Activated B cell treated with CpG ODN at 0.5 μM for 24 hours (primary cell): ENCODE measurements at regions of chr19 and their contacts with region 1.

Region 1: DNA sequence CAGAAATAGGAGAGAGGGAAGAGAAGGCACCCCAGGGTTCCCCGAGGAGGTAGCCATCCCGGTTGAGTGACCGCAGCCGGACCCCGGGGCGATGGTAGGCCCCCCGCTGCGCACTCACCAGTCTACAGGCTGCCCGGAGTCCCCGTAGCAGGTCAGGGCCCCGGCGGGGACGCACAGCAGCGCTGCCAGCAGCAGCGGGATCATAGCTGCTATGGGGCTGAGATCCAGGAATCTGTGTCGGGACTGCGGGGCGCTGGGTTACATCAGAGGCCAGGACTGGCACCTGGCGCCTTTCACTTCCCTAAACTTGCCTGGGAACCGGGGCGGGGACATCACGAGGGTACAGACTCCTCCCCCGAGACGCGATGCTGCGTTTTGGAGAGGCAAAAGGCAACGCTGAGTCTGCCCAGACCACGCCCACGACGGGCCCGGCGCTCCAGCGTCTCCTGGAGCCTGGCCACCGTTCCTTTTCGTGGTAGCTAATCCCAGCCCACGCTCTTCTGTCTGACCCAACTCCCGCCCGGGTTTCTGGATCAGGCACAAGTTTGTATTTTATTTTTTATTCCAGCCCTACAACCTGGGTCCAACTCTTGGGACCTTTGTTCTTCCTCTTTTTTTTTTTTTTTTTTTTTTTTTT is at the start of gene DNASE2:
- DNase-seq: peak; percentile 85
- ATAC-seq: peak; percentile 84
- H3K4me3 Mint-ChIP-seq: peak within 1 kb of the TSS; percentile 92
- H3K27ac Mint-ChIP-seq: peak within 1 kb of the TSS; percentile 94
- H3K4me1 Mint-ChIP-seq: peaks cover 34% of the 10 kb centered on the region
- H3K27me3 Mint-ChIP-seq: no peaks in the 10 kb centered on the region
- CTCF ChIP-seq: no peak
- total RNA-seq, gene DNASE2: 26.5 and 27.2 TPM in 2 replicates

Region 2: GRCh38 chr19:12867120-12868099 is 13.9 kb before region 1 on chr19:
- CTCF ChIA-PET with region 1: no interaction called
- POLR2A ChIA-PET with region 1: interaction called, 5 read pairs
- intact Hi-C with region 1: loop called (anchors 1 kb)
- DNase-seq: peak; percentile 74
- ATAC-seq: peak; percentile 89
- H3K4me3 Mint-ChIP-seq: peak overlapping the region; percentile 85
- H3K27ac Mint-ChIP-seq: peak overlapping the region; percentile 14
- H3K4me1 Mint-ChIP-seq: peaks cover 13% of the 10 kb centered on the region
- H3K27me3 Mint-ChIP-seq: peaks cover 2% of the 10 kb centered on the region
- CTCF ChIP-seq: no peak

Region 3: GRCh38 chr19:12913011-12913561 is 31.8 kb after region 1 on chr19:
- CTCF ChIA-PET with region 1: no interaction called
- POLR2A ChIA-PET with region 1: interaction called, 10 read pairs
- intact Hi-C with region 1: loop called (anchors 2 kb)
- DNase-seq: no peak
- ATAC-seq: no peak
- H3K4me3 Mint-ChIP-seq: no peak overlapping the region
- H3K27ac Mint-ChIP-seq: no peak overlapping the region
- H3K4me1 Mint-ChIP-seq: peaks cover 12% of the 10 kb centered on the region
- H3K27me3 Mint-ChIP-seq: no peaks in the 10 kb centered on the region
- CTCF ChIP-seq: no peak

Region 4: DNA sequence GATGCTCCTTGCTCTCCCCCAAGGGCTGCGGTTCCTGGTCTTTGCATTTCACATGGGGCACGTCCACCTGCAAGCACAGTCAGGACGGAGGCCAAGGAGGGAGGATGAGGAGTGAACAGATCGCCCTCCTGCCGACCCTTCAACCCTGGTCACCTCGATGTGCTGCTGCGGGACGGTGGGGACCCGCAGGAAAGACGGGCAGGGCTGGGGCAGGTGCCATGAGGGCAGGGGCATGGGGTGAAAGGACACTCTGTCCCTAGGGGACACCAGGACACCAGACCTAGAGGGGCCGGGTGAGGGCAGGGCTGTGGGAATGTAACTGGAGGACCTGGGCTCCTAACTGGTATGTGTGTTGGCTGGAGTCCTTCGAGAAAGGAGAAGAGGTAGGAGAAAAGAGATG is 37.0 kb after region 1 on chr19:
- CTCF ChIA-PET with region 1: no interaction called
- POLR2A ChIA-PET with region 1: interaction called, 17 read pairs
- intact Hi-C with region 1: loop called (anchors 1 kb)
- DNase-seq: no peak
- ATAC-seq: no peak
- H3K4me3 Mint-ChIP-seq: no peak overlapping the region
- H3K27ac Mint-ChIP-seq: no peak overlapping the region
- H3K4me1 Mint-ChIP-seq: peaks cover 21% of the 10 kb centered on the region
- H3K27me3 Mint-ChIP-seq: no peaks in the 10 kb centered on the region
- CTCF ChIP-seq: no peak

Region 5: DNA sequence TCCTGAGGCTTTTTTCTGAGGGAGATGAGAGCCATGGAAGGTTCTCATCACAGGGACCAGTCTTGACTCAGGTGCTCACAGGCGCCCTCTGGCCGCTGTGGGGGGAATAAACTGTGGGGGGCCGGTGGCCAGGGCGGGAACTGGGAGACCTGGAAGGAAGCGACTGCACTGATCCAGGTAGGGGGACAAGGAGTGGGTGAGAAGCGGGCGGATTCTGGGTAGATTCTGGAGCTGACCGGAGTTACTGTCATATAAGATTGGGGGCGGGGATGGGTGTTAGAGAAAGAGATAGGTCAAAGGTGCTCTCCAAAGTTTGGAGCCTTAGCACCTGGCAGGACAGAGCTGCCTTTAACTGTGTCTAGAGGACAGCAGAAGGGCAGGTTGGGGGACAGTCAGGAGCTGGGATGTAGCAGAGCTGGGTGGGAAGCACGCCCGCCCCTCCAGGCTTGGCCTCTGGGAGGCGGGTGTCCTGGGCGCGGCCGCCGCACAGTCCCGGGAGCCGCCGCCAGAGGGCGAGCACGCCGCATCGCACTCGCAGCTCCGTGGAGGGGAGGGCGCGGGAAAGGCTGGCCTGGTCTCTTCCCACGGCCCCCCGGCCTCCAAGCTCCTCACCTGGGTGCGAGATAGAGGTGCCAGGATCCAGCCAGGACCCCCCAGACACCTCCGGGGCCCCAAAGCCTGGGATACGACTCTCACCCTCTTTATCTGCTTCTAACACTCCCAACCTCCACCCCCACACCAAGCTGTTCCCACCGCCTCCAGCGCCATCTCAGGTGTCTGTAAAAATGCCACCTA is 83.9 kb after region 1 on chr19:
- CTCF ChIA-PET with region 1: interaction called, 39 read pairs
- POLR2A ChIA-PET with region 1: interaction called, 13 read pairs
- intact Hi-C with region 1: loop called (anchors 1 kb)
- DNase-seq: peak; percentile 91
- ATAC-seq: peak; percentile 97
- H3K4me3 Mint-ChIP-seq: peak overlapping the region; percentile 87
- H3K27ac Mint-ChIP-seq: peak overlapping the region; percentile 69
- H3K4me1 Mint-ChIP-seq: peaks cover 7% of the 10 kb centered on the region
- H3K27me3 Mint-ChIP-seq: no peaks in the 10 kb centered on the region
- CTCF ChIP-seq: no peak

Region 6: DNA sequence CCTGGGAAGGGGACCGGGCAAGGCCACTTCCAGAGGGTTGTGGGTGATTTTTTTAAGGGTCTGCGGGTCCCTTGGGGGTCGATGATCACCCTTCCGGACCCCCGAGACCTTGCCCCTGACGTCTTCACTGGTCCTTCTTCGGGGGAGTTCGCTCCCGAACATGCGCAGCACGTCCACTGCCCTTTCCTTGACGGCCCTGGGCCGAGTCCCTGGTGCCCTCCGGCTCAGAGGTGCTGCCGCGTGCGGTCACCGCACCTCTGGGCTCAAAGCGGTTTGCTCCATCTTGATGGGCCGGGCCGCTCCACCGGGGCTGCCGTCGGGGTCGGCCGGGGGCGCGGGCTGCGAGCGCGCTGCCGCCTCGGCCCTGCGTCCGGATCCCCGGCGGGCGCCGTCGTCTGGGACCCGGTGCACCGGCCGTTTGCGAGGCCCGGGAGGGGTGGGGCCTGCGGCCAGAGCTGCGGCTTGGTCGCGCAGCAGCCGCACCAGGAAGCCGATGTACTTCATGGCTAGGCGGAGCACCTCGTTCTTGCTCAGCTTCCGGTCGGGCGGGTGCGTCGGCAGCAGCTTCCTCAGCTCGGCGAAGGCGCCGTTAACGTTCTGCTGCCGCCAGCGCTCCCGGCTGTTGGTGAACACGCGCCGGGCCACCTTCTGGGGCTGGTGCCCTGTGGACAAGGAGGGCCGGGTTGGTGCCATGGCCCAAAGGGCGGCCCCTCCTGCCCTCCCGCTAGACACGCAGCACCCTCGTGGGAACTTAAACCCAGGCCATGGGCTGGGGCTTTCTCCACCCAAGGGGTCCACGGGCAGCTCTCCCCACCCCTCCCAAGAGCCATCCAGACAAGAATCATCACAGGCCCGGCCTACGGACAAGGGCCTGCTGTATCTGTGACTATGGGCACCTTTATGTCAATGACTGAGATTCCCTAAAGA is 218.0 kb after region 1 on chr19:
- CTCF ChIA-PET with region 1: interaction called, 6 read pairs
- POLR2A ChIA-PET with region 1: interaction called, 14 read pairs
- intact Hi-C with region 1: no loop called
- DNase-seq: peak; percentile 70
- ATAC-seq: peak; percentile 2
- H3K4me3 Mint-ChIP-seq: peak overlapping the region; percentile 88
- H3K27ac Mint-ChIP-seq: peak overlapping the region; percentile 93
- H3K4me1 Mint-ChIP-seq: peaks cover 76% of the 10 kb centered on the region
- H3K27me3 Mint-ChIP-seq: no peaks in the 10 kb centered on the region
- CTCF ChIP-seq: no peak